GM10248 (cell line): ENCODE measurements at regions of chr9 and their contacts with region 1.

Region 1: GRCh38 chr9:109035684-109036423 is 22.6 kb upstream of the CTNNAL1 start:
- DNase-seq: no peak
- CTCF ChIP-seq: no peak

Region 2: DNA sequence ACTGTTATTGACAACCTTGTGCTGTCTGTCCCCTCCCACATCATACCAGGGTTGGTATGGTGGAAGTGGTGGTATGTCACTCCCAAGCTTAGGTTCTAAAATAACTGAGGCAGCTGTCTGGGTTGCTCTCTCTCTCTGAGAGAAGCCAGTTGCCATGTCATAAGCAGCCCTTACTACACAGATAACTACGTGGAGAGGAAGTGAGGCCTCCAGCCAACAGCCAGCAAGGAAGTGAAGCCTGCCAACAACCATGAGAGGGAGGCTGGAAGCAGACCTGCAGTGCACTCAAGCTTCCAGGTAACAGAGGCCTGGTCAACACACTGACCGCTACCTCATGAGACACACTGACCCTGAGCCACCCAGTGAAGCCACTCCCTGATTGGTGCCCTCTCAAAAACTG is 41.2 kb before region 1 on chr9:
- CTCF ChIA-PET with region 1: no interaction called
- POLR2A ChIA-PET with region 1: no interaction called
- DNase-seq: peak; percentile 20
- CTCF ChIP-seq: no peak

Region 3: GRCh38 chr9:109005678-109006077 is 30.2 kb before region 1 on chr9:
- CTCF ChIA-PET with region 1: no interaction called
- POLR2A ChIA-PET with region 1: no interaction called
- DNase-seq: no peak
- CTCF ChIP-seq: no peak

Region 4: GRCh38 chr9:109017493-109017892 is 18.4 kb before region 1 on chr9:
- CTCF ChIA-PET with region 1: interaction called, 24 read pairs
- POLR2A ChIA-PET with region 1: no interaction called
- DNase-seq: peak; percentile 48
- CTCF ChIP-seq: no peak

Region 5: GRCh38 chr9:109046346-109046745 is 10.5 kb after region 1 on chr9:
- CTCF ChIA-PET with region 1: interaction called, 15 read pairs
- POLR2A ChIA-PET with region 1: no interaction called
- DNase-seq: no peak
- CTCF ChIP-seq: no peak

Region 6: GRCh38 chr9:109063760-109064159 is 27.9 kb after region 1 on chr9:
- CTCF ChIA-PET with region 1: no interaction called
- POLR2A ChIA-PET with region 1: no interaction called
- DNase-seq: no peak
- CTCF ChIP-seq: no peak

Region 7: DNA sequence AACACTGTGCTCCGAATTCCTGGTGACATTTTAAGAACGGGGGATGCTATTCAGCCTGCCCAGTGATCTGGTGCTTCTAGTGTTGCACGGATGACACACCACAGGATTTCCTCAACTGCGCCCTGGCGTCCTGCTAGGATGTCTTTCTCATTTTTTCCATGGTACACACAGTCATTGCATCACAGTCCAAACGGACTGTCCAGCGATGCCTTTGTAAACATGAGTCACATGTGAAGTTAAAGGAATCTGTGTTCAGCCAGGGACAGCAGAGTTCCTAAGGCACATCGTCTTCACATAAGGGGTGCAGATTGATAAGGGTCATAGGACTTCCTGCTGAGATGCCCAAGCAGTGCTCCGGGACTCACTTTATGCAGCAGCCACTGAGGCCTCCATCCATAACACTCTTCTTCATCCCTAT is 471.6 kb after region 1 on chr9:
- CTCF ChIA-PET with region 1: no interaction called
- POLR2A ChIA-PET with region 1: no interaction called
- DNase-seq: no peak
- CTCF ChIP-seq: no peak